ENCODE measurements at regions of chrX and their contacts with region 1.

Region 1: DNA sequence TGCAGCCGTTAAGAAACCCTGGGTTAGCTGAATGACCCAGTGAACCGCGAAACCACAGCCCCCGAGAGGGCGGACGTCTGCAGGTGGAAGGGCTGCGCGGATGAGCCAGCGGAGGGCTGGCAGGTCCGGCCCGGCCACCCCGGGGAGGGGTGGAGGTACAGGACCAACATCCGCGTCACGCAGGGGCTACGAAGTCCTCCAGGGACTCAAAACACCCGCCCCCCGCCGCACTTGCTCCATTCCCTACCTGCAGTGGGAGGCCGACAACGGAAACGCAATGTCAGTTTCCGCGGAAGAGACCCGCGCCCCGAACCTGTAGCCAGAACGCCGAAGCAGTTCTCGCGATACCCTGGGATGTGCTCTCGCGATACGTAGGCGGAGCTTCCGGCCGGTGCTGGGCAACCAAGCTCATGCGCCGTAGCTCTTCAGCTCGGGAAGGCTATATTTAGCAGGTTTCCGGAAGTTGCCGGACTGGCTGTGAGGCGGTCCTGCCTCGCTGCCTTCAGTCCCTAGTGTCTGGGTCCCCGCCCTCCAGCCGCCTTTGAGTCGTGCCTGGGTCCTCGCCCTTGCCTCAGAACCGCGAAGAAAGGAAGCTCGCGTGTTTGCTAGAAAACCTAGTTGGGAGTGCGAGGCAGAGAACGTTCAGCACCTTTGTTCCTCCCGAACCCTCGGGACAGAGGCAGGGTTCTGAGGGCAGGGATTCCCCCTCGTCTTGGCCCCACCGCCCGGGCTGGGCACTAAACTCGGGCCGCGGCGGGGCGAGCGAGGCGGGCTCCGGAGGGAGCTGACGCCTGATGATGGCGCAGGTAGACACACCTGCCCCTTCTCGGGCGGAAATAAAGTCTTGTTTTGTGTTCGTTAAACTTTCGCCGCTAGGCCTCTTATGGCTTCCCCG is at the starts of genes OFD1 and TRAPPC2:
- DNase-seq: peak; percentile 92 to 95 (median 95)
- ATAC-seq: peak; percentile 100
- H3K4me3 ChIP-seq: peak within 1 kb of the TSS; percentile 93
- H3K27ac ChIP-seq: peak within 1 kb of the TSS; percentile 97
- H3K4me1 ChIP-seq: peaks cover 3% of the 10 kb centered on the region
- H3K27me3 ChIP-seq: no peaks in the 10 kb centered on the region
- total RNA-seq, gene OFD1: 9.8 to 13.2 (median 12.7) TPM
- total RNA-seq, gene TRAPPC2: 6.4 to 8.7 (median 7.8) TPM

Region 2: DNA sequence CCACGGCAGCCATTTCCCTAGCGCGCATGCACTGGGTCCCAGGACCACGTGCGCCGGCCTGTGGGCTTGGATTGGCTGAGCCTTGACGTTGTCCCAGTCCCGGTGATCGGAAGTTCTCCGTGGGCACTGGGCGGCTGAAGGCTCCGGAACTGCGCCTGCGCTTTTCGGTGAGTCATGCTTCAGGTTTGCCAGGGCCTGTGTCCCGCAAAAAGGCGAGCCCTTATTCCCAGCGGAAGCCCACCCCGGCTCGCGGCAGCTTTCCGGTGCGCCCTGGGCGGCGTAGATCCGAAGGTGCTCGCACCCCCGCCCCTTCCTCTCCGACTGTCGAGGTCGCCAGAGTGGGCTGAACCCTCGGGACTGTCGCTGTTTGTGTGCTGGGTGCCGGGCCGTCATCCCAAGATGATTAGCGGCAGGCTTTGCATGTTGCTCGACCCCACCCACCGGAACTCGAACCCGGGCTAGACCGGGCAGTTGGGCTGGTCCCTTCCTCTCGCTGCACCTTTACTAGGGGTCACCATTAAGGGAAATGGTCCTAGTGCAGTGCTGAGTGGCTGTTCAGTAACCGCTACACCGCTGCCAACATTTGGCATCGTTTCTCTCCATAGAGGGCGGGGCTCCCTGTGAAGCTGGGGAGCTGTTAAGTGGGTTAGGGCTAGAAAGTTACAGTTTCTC is 81.4 kb before region 1 on chrX and contains the start of gene TCEANC:
- intact Hi-C with region 1: loop called in 1 of 4 experiments (anchors 10 kb)
- DNase-seq: peak; percentile 97 to 99 (median 98)
- ATAC-seq: peak; percentile 100
- H3K4me3 ChIP-seq: peak within 1 kb of the TSS; percentile 52
- H3K27ac ChIP-seq: peak within 1 kb of the TSS; percentile 96
- H3K4me1 ChIP-seq: no peaks in the 10 kb centered on the region
- H3K27me3 ChIP-seq: no peaks in the 10 kb centered on the region
- total RNA-seq, gene TCEANC: 4.0 to 6.7 (median 4.5) TPM

Region 3: DNA sequence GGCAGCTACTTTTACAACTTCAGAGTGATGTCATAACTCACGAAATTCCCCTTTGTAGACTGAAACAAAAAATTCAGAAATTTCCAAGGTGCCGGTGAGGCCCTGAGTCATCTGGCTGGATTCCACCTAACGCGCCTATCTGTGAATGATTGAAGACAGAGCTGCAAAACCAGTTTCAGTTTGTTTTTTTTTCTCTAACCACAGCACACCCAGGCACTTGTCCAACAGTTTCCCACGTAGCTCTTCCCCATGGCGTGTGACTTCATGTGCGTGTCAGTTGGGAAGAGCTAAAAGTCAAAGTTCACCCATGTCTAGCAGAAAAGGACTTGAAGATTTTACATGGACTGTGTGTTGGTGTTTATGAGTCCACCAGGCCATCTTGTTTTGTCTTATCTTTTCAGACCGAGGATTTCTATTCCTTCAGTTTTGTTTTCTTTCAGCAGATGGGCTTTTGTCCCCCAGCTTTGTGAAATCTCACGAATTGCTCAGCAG is 65.2 kb before region 1 on chrX:
- intact Hi-C with region 1: loop called in 1 of 4 experiments (anchors 10 kb)
- DNase-seq: peak; percentile 57 to 73 (median 59)
- ATAC-seq: peak; percentile 70 to 80
- H3K4me3 ChIP-seq: no peak overlapping the region
- H3K27ac ChIP-seq: no peak overlapping the region
- H3K4me1 ChIP-seq: no peaks in the 10 kb centered on the region
- H3K27me3 ChIP-seq: no peaks in the 10 kb centered on the region